A673 (cell line): ENCODE measurements at regions of chr11 and their contacts with region 1.

Region 1: DNA sequence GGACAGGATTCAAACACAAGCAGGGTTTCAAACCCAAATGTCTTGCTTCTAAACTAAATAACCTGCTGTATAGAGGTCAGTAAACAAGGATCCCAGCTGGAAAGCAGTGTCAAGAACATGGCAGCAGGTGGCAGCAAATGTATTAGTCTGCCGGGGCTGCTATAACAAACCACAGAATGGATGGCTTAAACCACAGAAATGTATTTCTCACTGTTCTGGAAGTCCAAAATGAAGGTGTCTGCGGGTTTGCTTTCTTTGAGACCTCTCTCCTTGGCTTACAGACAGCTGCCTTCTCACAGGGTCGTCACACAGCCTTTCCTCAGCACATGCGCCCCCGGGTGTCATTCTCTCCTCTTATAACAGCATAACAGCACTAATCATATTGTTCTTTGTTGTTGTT is 65.1 kb upstream of the LRRC55 start:
- DNase-seq: peak; percentile 62
- H3K4me3 ChIP-seq: no peak overlapping the region
- H3K27ac ChIP-seq: no peak overlapping the region
- H3K4me1 ChIP-seq: no peaks in the 10 kb centered on the region
- H3K27me3 ChIP-seq: no peaks in the 10 kb centered on the region
- CTCF ChIP-seq: peak; percentile 80

Region 2: GRCh38 chr11:56841210-56841810 is 275.3 kb before region 1 on chr11:
- CTCF ChIA-PET with region 1: no interaction called
- POLR2A ChIA-PET with region 1: no interaction called
- intact Hi-C with region 1: loop called (anchors 2 kb)
- DNase-seq: peak; percentile 70
- H3K4me3 ChIP-seq: no peak overlapping the region
- H3K27ac ChIP-seq: no peak overlapping the region
- H3K4me1 ChIP-seq: no peaks in the 10 kb centered on the region
- H3K27me3 ChIP-seq: peaks cover 16% of the 10 kb centered on the region
- CTCF ChIP-seq: peak; percentile 79

Region 3: DNA sequence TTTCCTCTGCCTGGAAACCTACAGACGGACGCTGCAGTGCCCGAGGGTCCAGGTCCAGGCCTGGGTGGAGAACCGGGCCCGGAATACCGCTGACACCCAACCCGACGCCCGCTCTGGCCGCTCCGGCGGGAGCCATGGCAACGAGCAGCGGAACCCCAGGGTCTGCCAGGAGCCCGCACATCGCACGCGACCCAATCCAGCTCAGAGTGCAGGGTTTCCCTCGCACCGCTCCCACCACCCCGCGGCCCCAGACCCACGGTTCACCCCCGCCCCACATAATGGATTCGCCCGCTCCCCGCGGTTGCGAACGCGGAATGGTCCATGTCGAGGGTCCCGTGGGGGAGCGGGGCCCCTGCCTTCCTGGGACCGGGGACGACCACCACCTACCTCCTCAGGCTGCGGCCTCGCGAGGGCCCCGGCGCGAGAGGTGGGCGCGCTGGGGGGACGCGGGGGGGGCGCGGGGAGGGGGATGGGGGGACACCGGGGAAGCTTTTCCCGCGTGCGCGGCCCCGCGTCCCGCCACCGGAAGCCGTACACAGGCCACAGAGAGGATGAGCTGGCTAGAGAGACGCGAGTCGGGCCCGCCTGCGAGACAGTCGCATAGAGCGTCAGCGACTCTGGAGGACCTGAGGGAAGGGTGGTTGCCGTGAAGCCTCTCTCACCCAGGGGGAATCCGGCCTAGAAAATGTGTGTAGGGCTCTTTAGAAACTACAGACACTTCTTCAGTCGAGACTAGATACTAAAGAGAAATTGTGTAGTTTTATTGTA is 218.9 kb after region 1 on chr11 and contains the start of gene SSRP1:
- CTCF ChIA-PET with region 1: no interaction called
- POLR2A ChIA-PET with region 1: no interaction called
- intact Hi-C with region 1: no loop called
- DNase-seq: peak; percentile 97
- H3K4me3 ChIP-seq: peak within 1 kb of the TSS; percentile 86
- H3K27ac ChIP-seq: peak within 1 kb of the TSS; percentile 93
- H3K4me1 ChIP-seq: peaks cover 11% of the 10 kb centered on the region
- H3K27me3 ChIP-seq: no peaks in the 10 kb centered on the region
- CTCF ChIP-seq: no peak; the same call in 1 of the 2 replicates
- total RNA-seq, gene SSRP1: 393 and 399 TPM in 2 replicates